ENCODE measurements at regions of chr13 and their contacts with region 1.

Region 1: GRCh38 chr13:53054569-53054968 is 26.0 kb downstream of the OLFM4 start:
- DNase-seq: peak in 6 of 42 donors; percentile 9 to 44 (median 22)

Region 2: GRCh38 chr13:53092931-53093330 is 38.4 kb after region 1 on chr13:
- intact Hi-C with region 1: loop called (anchors 2 kb)
- DNase-seq: peak in 1 of 42 donors; percentile 20

Region 3: DNA sequence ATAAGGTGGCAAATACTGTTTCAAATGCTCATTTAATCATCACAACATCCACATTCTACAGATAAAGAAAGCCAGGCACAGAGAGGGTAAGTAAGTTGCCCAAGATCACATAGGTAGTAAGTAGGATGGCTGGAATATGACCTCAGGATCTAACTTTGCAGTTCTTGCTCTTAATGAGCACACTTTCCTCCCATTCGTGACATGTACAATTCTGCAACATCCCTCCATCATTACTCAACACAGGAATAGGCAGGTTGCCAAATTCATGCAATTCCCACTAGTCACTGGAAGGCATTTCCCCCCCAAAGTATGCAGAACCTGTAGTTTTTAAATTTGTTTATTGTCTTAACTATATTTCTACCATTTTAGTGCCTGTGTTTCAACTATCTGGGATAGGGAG is 83.2 kb after region 1 on chr13:
- intact Hi-C with region 1: no loop called
- DNase-seq: no peak

Region 4: GRCh38 chr13:53368948-53369347 is 314.4 kb after region 1 on chr13:
- intact Hi-C with region 1: no loop called
- DNase-seq: no peak

Measured in head of caudate nucleus (tissue), 42 donors.